HEK293 (cell line): ENCODE measurements at regions of chr2 and their contacts with region 1.

Region 1: DNA sequence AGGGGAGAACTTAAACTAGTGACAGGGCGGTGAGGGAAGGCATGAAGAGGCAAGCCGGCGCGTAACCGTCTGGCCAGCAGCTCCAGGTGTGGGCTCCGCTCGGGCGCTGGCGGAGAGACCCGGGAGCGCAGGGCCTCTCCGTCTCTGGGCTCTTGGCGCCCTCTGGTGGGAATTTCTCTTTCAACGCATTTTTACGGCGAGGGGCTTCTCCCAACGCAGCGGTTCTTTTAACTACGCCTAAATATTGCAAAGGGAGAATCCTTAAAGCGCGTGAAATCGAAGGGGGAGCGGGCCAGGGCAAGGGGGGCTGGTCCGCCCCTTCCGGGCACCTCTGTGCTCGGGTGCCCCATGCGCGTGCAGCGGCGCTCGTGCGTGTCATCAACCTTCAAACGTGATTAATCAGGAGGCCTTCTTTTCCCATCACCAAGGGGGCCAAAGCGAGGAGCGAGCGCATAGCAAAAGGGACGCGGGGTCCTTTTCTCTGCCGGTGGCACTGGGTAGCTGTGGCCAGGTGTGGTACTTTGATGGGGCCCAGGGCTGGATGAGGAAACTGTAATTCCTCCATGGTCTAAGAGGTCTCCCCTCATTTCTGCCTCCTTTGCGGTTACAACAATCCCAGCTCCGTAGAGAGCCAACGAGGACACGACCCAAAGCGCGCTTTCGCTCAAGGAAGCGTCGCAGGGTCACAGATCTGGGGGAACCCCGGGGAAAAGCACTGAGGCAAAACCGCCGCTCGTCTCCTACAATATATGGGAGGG is 762 bp upstream of the GAD1 start:
- H3K4me3 ChIP-seq: peak overlapping the region; percentile 55
- H3K27ac ChIP-seq: peak overlapping the region; percentile 84; the same call in 1 of the 2 replicates
- H3K4me1 ChIP-seq: no peaks in the 10 kb centered on the region
- CTCF ChIP-seq: peak; percentile 96

Region 2: DNA sequence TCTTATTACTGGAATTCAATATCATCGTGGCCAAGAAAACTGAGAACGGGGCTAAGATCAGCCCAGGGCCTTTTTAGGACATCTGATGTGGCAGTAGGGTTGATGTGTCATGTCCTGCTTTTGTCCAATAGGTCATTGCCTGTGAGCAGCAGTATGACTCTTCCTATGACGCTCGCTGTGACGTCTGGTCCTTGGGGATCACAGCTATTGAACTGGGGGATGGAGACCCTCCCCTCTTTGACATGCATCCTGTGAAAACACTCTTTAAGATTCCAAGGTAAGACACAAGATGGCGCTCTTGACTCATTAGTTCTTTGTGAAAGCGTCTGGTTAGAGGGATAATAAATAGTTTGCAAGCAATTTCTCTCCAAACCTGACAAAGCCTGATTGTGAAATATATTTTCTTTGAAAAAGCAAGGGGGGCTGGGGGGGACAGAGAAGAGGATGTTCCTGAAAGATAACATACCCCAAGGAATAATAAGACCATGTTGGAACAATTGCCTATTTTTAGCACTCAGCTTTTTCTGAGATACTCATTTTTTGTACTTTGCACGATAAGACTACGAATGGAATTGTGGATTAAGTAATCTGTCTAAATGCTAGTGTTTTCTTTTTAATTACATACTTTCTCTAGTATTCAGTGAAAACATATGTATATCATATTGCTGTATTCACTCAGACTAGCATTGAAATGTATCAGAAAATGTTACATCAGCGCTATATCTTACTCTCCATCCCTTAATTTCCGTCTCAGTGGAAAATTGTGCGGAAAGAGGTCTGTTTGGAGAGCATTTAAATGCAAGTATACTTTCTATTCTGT is 579.9 kb before region 1 on chr2:
- CTCF ChIA-PET with region 1: interaction called, 17 read pairs
- POLR2A ChIA-PET with region 1: interaction called, 9 read pairs
- H3K4me3 ChIP-seq: no peak overlapping the region
- H3K27ac ChIP-seq: no peak overlapping the region
- H3K4me1 ChIP-seq: no peaks in the 10 kb centered on the region
- CTCF ChIP-seq: peak; percentile 54; the same call in 1 of the 2 replicates

Region 3: GRCh38 chr2:170324640-170325046 is 491.3 kb before region 1 on chr2:
- CTCF ChIA-PET with region 1: interaction called, 41 read pairs
- POLR2A ChIA-PET with region 1: no interaction called
- H3K4me3 ChIP-seq: no peak overlapping the region
- H3K27ac ChIP-seq: no peak overlapping the region
- H3K4me1 ChIP-seq: no peaks in the 10 kb centered on the region
- CTCF ChIP-seq: peak; percentile 79

Region 4: GRCh38 chr2:170361090-170361936 is 454.6 kb before region 1 on chr2:
- CTCF ChIA-PET with region 1: interaction called, 18 read pairs
- POLR2A ChIA-PET with region 1: no interaction called
- H3K4me3 ChIP-seq: no peak overlapping the region
- H3K27ac ChIP-seq: no peak overlapping the region
- H3K4me1 ChIP-seq: no peaks in the 10 kb centered on the region
- CTCF ChIP-seq: peak; percentile 47; the same call in 1 of the 2 replicates

Region 5: GRCh38 chr2:170369894-170370293 is 446.0 kb before region 1 on chr2:
- CTCF ChIA-PET with region 1: interaction called, 115 read pairs
- POLR2A ChIA-PET with region 1: no interaction called
- H3K4me3 ChIP-seq: no peak overlapping the region
- H3K27ac ChIP-seq: no peak overlapping the region
- H3K4me1 ChIP-seq: no peaks in the 10 kb centered on the region
- CTCF ChIP-seq: 0 out of 2 replicates have a peak, but pooled peaks have one; percentile 7

Region 6: GRCh38 chr2:170377500-170378207 is 438.3 kb before region 1 on chr2:
- CTCF ChIA-PET with region 1: interaction called, 115 read pairs
- POLR2A ChIA-PET with region 1: interaction called, 3 read pairs
- H3K4me3 ChIP-seq: no peak overlapping the region
- H3K27ac ChIP-seq: no peak overlapping the region
- H3K4me1 ChIP-seq: peaks cover 7% of the 10 kb centered on the region; the same call in 1 of the 2 replicates
- CTCF ChIP-seq: no peak

Region 7: DNA sequence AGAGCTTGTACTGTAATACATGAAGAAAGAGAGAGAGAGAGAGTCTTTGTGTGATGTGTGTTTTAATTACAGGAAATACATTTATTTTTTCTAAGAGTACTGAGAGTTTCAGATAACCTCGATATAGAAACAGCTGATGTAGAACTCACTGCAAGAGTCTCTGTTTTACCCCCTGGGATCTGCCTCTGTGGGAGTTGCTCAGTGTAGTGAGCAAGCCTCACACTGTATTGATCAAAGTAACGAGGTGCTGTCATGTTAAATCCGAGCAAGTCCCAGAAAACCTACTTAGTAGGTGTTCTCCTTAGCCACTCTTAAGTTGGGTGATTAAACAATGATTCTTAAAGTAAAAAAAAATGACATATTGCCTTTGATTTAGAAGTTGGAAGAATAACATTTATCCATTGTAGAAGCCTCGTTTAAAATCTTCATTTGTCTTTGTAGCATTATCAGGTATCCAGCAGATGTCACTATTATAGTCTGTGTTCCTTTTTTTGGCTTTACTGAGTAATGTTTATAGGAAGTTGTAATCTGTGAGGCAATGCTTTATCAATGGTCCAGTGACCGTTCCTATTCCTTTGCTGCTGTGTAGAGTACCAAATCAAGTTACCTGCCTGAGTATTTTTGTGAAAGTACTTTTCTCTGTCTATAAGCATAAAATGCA is 419.0 kb before region 1 on chr2:
- CTCF ChIA-PET with region 1: interaction called, 15 read pairs
- POLR2A ChIA-PET with region 1: no interaction called
- H3K4me3 ChIP-seq: no peak overlapping the region
- H3K27ac ChIP-seq: no peak overlapping the region
- H3K4me1 ChIP-seq: no peaks in the 10 kb centered on the region
- CTCF ChIP-seq: no peak

Region 8: DNA sequence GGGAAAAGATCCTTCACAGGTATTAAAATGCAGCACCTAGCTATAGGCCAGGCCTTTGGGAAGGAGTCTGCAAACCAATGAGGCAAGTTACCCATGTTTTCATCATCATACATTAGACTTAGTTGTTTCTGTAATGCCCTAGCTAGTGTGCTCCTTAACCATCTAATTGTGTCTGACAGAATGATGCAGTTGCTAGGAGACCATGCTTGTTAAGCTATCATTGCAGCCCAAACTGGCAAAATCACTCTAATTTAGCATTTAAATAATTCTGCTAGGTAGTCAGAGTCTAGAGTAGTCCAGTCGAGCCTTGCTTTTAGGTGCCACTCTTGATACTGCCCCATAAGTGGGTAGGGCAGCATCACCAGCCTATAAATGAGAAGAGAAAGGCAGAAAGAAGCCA is 35.7 kb after region 1 on chr2:
- CTCF ChIA-PET with region 1: no interaction called
- POLR2A ChIA-PET with region 1: no interaction called
- H3K4me3 ChIP-seq: no peak overlapping the region
- H3K27ac ChIP-seq: no peak overlapping the region
- H3K4me1 ChIP-seq: no peaks in the 10 kb centered on the region
- CTCF ChIP-seq: no peak

Region 9: DNA sequence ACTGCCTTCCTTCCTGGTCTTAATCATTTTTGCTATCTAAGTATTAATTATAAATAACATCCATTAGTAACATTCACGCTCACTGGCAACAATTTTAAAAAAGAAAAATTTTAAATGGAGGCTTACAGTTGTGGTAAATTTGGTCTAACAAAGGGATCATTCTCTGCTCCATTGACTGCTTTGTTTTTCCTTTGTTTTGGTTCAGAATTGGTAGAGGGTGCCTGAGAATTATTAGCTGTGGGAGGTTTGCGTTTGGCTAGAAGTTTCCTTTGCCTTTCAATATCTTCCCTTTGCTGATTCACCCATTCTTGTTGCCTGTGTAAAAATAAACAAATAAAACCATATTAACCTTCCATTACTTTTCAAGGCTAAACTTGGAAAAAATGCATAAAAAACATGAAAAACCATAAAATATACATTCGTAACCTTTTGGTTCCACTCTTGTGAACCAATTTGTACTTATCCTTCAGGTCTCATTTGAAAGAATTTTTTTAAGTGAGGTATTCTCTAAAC is 230.2 kb after region 1 on chr2:
- CTCF ChIA-PET with region 1: no interaction called
- POLR2A ChIA-PET with region 1: no interaction called
- H3K4me3 ChIP-seq: no peak overlapping the region
- H3K27ac ChIP-seq: no peak overlapping the region
- H3K4me1 ChIP-seq: no peaks in the 10 kb centered on the region
- CTCF ChIP-seq: no peak